ENCODE measurements at regions of chr2 and their contacts with region 1.

Region 1: GRCh38 chr2:101419096-101419663 is 31.9 kb upstream of the CREG2 start:
- DNase-seq: peak; percentile 59 to 66 (median 64)
- H3K4me3 ChIP-seq: no peak overlapping the region
- H3K4me3 Mint-ChIP-seq: no peak overlapping the region
- H3K27ac ChIP-seq: no peak overlapping the region
- H3K27ac Mint-ChIP-seq: no peak overlapping the region
- H3K4me1 ChIP-seq: no peaks in the 10 kb centered on the region
- H3K4me1 Mint-ChIP-seq: no peaks in the 10 kb centered on the region
- H3K27me3 ChIP-seq: no peaks in the 10 kb centered on the region
- H3K27me3 Mint-ChIP-seq: no peaks in the 10 kb centered on the region

Region 2: DNA sequence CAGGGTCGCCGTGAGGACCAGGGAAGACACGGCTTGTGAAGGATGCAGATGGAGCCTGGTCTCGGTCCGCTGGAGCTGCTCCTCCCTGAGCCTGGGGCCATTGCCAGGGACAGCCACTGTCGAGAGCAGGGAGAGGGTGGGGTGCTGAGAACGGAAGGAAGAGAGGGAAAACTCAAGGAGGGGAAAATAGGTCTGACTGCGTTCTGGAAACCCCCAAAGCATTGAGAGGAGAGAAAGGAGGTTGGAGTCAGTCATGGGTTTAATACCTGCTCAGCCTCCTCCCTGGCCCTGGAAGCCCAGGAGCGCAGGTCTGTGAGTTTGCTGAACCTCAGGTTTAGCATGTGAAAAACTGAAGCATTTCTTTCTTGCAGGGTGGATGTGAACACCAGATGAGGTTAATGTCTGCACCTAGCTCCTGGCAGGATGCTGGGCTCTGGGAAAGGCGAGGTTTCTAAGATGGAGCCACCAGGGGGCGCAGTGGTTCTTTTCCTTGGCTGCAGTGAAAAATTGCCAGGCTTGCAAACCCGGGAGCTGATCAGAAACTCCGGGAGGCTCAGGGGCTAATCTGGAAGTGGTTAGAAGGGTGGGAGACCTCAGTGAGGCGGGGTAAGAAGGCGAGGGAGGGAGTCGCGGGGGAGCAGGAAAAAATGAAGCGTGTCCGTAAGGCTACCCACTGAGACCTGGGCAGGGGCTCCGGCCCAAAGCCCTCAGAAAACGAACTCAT is 77.1 kb before region 1 on chr2:
- CTCF ChIA-PET with region 1: interaction called, 21 read pairs
- POLR2A ChIA-PET with region 1: no interaction called
- intact Hi-C with region 1: no loop called
- DNase-seq: peak; percentile 59 to 66 (median 62)
- H3K4me3 ChIP-seq: no peak overlapping the region
- H3K4me3 Mint-ChIP-seq: peak overlapping the region in 4 of 8 donors; percentile 21 to 58 (median 34)
- H3K27ac ChIP-seq: no peak overlapping the region
- H3K27ac Mint-ChIP-seq: peak overlapping the region in 5 of 7 donors; percentile 25 to 75 (median 65)
- H3K4me1 ChIP-seq: peaks cover 26% of the 10 kb centered on the region
- H3K4me1 Mint-ChIP-seq: peaks cover 21 to 33% (median 29%) of the 10 kb centered on the region in 4 donors
- H3K27me3 ChIP-seq: no peaks in the 10 kb centered on the region
- H3K27me3 Mint-ChIP-seq: no peaks in the 10 kb centered on the region

Region 3: GRCh38 chr2:101717071-101717845 is 298.1 kb after region 1 on chr2:
- CTCF ChIA-PET with region 1: interaction called, 16 read pairs
- POLR2A ChIA-PET with region 1: no interaction called
- intact Hi-C with region 1: no loop called
- DNase-seq: peak; percentile 61 to 79 (median 68)
- H3K4me3 ChIP-seq: peak overlapping the region in 1 of 2 donors; percentile 17
- H3K4me3 Mint-ChIP-seq: peak overlapping the region; percentile 50 to 79 (median 72)
- H3K27ac ChIP-seq: peak overlapping the region; percentile 67
- H3K27ac Mint-ChIP-seq: peak overlapping the region; percentile 82 to 96 (median 93)
- H3K4me1 ChIP-seq: peaks cover 98% of the 10 kb centered on the region
- H3K4me1 Mint-ChIP-seq: peaks cover 60 to 87% (median 71%) of the 10 kb centered on the region in 4 donors
- H3K27me3 ChIP-seq: no peaks in the 10 kb centered on the region
- H3K27me3 Mint-ChIP-seq: no peaks in the 10 kb centered on the region

Region 4: DNA sequence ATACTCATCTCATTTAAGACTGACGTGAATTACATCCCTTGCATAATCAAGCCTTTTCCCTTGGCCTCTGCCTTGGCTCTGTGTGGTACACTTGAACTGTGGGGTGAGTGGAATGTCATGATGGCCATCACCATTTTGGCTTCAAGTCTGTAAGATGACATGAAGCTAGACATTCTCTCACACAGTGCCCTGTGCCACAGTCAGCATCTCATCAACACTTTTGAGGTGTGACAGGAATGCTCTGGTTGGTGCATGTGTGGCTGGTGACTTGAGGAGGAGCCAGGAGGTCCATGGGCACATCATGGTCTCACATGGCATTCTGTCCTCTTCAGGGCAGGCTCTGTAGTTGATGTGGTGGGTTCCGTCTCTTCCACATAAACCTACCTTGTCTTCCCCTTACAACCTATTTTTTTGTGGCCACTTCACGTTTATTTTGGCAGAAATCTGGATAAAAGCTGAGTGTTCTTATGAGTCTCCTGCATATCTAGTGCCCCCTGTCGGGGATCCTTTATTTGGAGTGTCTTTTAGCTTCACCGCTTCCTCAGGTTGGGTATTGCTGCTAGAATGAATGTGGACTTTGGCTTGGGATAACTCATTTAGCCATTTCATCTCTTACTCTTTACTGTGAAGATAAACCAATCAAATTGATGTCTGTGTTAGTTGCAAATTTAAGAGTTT is 306.5 kb after region 1 on chr2:
- CTCF ChIA-PET with region 1: interaction called, 25 read pairs
- POLR2A ChIA-PET with region 1: interaction called, 3 read pairs
- intact Hi-C with region 1: loop called (anchors 1 kb)
- DNase-seq: peak in 2 of 5 donors; percentile 27 to 39
- H3K4me3 ChIP-seq: no peak overlapping the region
- H3K4me3 Mint-ChIP-seq: peak overlapping the region in 3 of 8 donors; percentile 17 to 39 (median 34)
- H3K27ac ChIP-seq: no peak overlapping the region
- H3K27ac Mint-ChIP-seq: peak overlapping the region in 4 of 7 donors; percentile 12 to 66 (median 24)
- H3K4me1 ChIP-seq: peaks cover 89% of the 10 kb centered on the region
- H3K4me1 Mint-ChIP-seq: peaks cover 70 to 99% (median 85%) of the 10 kb centered on the region in 4 donors
- H3K27me3 ChIP-seq: no peaks in the 10 kb centered on the region
- H3K27me3 Mint-ChIP-seq: no peaks in the 10 kb centered on the region

Region 5: GRCh38 chr2:101823347-101823791 is 404.2 kb after region 1 on chr2:
- CTCF ChIA-PET with region 1: interaction called, 163 read pairs
- POLR2A ChIA-PET with region 1: interaction called, 4 read pairs
- intact Hi-C with region 1: loop called (anchors 2 kb)
- DNase-seq: peak; percentile 62 to 82 (median 67)
- H3K4me3 ChIP-seq: no peak overlapping the region
- H3K4me3 Mint-ChIP-seq: peak overlapping the region in 7 of 8 donors; percentile 13 to 69 (median 48)
- H3K27ac ChIP-seq: no peak overlapping the region
- H3K27ac Mint-ChIP-seq: peak overlapping the region; percentile 66 to 90 (median 83)
- H3K4me1 ChIP-seq: peaks cover 67% of the 10 kb centered on the region
- H3K4me1 Mint-ChIP-seq: peaks cover 45 to 87% (median 66%) of the 10 kb centered on the region in 4 donors
- H3K27me3 ChIP-seq: no peaks in the 10 kb centered on the region
- H3K27me3 Mint-ChIP-seq: no peaks in the 10 kb centered on the region

Region 6: GRCh38 chr2:101844055-101844635 is 425.0 kb after region 1 on chr2:
- CTCF ChIA-PET with region 1: interaction called, 13 read pairs
- POLR2A ChIA-PET with region 1: no interaction called
- intact Hi-C with region 1: no loop called
- DNase-seq: no peak
- H3K4me3 ChIP-seq: no peak overlapping the region
- H3K4me3 Mint-ChIP-seq: no peak overlapping the region
- H3K27ac ChIP-seq: no peak overlapping the region
- H3K27ac Mint-ChIP-seq: peak overlapping the region in 1 of 7 donors; percentile 3
- H3K4me1 ChIP-seq: peaks cover 20% of the 10 kb centered on the region
- H3K4me1 Mint-ChIP-seq: peaks cover 24 to 44% (median 38%) of the 10 kb centered on the region in 4 donors
- H3K27me3 ChIP-seq: no peaks in the 10 kb centered on the region
- H3K27me3 Mint-ChIP-seq: no peaks in the 10 kb centered on the region

Region 7: GRCh38 chr2:102449370-102449974 is 1030.3 kb after region 1 on chr2:
- CTCF ChIA-PET with region 1: no interaction called
- POLR2A ChIA-PET with region 1: no interaction called
- intact Hi-C with region 1: loop called (anchors 5 kb)
- DNase-seq: peak; percentile 44 to 63 (median 49)
- H3K4me3 ChIP-seq: no peak overlapping the region
- H3K4me3 Mint-ChIP-seq: no peak overlapping the region
- H3K27ac ChIP-seq: no peak overlapping the region
- H3K27ac Mint-ChIP-seq: no peak overlapping the region
- H3K4me1 ChIP-seq: no peaks in the 10 kb centered on the region
- H3K4me1 Mint-ChIP-seq: peaks cover 0 to 2% (median 0%) of the 10 kb centered on the region in 4 donors
- H3K27me3 ChIP-seq: no peaks in the 10 kb centered on the region
- H3K27me3 Mint-ChIP-seq: no peaks in the 10 kb centered on the region

Measured in CD4-positive, alpha-beta memory T cell (primary cell).